ENCODE measurements at regions of chr11 and their contacts with region 1.

Region 1: DNA sequence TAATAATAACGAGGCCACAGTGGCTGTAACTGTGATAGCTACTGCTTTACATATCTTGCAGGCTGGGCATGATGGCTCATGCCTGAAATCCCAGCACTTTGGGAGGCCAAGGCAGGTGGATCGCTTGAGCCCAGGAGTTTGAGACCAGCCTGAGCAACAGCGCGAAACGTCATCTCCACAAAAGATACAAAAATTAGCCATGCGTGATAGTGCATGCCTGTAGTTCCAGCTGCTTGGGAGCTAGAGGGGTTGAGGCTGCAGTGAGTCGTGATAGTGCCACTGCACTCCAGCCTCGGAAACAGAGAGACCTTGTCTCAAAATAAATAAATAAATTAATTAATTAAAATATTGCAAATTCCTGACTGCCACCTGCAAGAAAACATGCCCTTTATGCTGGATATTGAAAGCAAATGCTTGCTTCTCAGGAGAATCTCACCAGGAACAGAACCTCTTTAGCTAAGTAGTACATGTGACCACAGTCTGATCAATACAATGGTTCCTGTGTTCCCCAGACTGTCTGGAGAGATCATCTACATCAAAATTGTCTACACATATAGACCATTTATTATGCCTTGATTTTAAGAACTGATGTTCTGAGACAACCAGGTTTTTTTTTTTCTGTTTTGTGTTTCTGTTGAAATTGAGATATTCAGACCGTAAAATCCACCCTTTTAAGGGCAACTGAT is 6.3 kb downstream of the ZBTB3 start:
- DNase-seq: no peak
- H3K4me3 ChIP-seq: no peak overlapping the region
- H3K4me3 Mint-ChIP-seq: no peak overlapping the region
- H3K27ac ChIP-seq: no peak overlapping the region
- H3K27ac Mint-ChIP-seq: peak overlapping the region in 2 of 8 donors; percentile 3 to 15
- H3K4me1 ChIP-seq: peaks cover 7% of the 10 kb centered on the region
- H3K4me1 Mint-ChIP-seq: peaks cover 9 to 28% (median 13%) of the 10 kb centered on the region in 3 donors
- H3K27me3 ChIP-seq: no peaks in the 10 kb centered on the region
- H3K27me3 Mint-ChIP-seq: no peaks in the 10 kb centered on the region

Region 2: GRCh38 chr11:62627714-62628113 is 119.9 kb before region 1 on chr11:
- CTCF ChIA-PET with region 1: no interaction called
- POLR2A ChIA-PET with region 1: interaction called, 16 read pairs
- DNase-seq: no peak
- H3K4me3 ChIP-seq: no peak overlapping the region
- H3K4me3 Mint-ChIP-seq: no peak overlapping the region
- H3K27ac ChIP-seq: no peak overlapping the region
- H3K27ac Mint-ChIP-seq: peak overlapping the region in 3 of 8 donors; percentile 18 to 89 (median 73)
- H3K4me1 ChIP-seq: no peaks in the 10 kb centered on the region
- H3K4me1 Mint-ChIP-seq: peaks cover 0 to 5% (median 0%) of the 10 kb centered on the region in 3 donors
- H3K27me3 ChIP-seq: no peaks in the 10 kb centered on the region
- H3K27me3 Mint-ChIP-seq: peaks cover 0 to 1% of the 10 kb centered on the region in 2 donors

Region 3: DNA sequence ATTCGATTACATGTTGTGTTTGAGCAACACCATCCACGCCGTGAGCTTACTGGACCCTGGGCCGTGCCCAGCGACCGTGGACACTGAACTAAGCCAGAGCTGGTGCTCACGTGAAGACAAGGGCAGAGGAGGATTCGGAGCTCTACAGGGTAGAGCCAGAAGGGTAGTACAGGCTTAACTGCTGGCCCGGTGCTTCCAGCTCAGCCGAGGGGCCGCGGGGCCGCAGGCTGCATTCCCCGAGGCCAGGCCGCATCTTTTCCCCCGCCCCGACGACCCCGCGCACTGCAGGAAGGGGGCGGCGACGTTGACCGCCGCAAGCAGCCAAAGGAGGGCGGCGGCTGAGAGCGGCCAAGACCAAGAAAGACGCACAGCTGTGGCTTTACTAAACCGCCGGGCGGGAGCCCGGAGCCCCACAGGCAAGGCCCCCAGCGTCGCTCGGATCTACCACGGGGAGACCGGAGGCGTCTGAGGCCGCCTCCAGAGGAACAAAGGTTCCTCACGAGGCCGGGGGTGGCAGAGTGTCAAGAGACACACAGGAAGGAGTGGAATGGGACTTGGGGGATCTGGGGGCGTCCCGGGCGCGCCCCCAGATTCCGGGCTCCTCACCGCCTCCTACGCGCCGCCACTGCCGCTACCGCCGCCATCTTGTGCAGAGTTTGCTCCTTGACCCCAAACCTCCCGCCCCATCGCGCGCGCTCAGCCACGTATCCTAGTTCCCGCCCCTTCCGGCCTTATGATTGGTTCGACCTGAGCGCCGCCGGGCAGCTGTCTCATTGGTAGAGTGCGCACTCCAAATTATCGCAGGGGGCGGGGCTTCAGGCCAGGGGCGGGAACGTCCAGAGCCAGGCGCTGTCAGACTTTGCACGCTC is 101.4 kb before region 1 on chr11 and contains the start of gene GANAB:
- CTCF ChIA-PET with region 1: no interaction called
- POLR2A ChIA-PET with region 1: no interaction called
- DNase-seq: peak; percentile 96 to 99 (median 98)
- H3K4me3 ChIP-seq: peak within 1 kb of the TSS; percentile 75
- H3K4me3 Mint-ChIP-seq: peak within 1 kb of the TSS; percentile 89 to 97 (median 96)
- H3K27ac ChIP-seq: peak within 1 kb of the TSS; percentile 77
- H3K27ac Mint-ChIP-seq: peak within 1 kb of the TSS; percentile 88 to 99 (median 98)
- H3K4me1 ChIP-seq: peaks cover 24% of the 10 kb centered on the region
- H3K4me1 Mint-ChIP-seq: peaks cover 19 to 40% (median 25%) of the 10 kb centered on the region in 3 donors
- H3K27me3 ChIP-seq: no peaks in the 10 kb centered on the region
- H3K27me3 Mint-ChIP-seq: no peaks in the 10 kb centered on the region
- total RNA-seq, gene GANAB: 213 to 219 TPM

Measured in CD8-positive, alpha-beta memory T cell (primary cell).